Calu3 (cell line): ENCODE measurements at regions of chr7 and their contacts with region 1.

Region 1: GRCh38 chr7:24576171-24577025 is 3.1 kb downstream of the PALS2 start:
- DNase-seq: peak; percentile 56
- H3K4me3 Mint-ChIP-seq: peak overlapping the region; percentile 6
- H3K27ac Mint-ChIP-seq: no peak overlapping the region
- H3K4me1 Mint-ChIP-seq: peaks cover 50% of the 10 kb centered on the region
- H3K27me3 Mint-ChIP-seq: peaks cover 10% of the 10 kb centered on the region
- CTCF ChIP-seq: peak; percentile 85

Region 2: GRCh38 chr7:24271938-24272337 is 304.5 kb before region 1 on chr7:
- CTCF ChIA-PET with region 1: no interaction called
- intact Hi-C with region 1: no loop called
- DNase-seq: no peak
- H3K4me3 Mint-ChIP-seq: no peak overlapping the region
- H3K27ac Mint-ChIP-seq: no peak overlapping the region
- H3K4me1 Mint-ChIP-seq: no peaks in the 10 kb centered on the region
- H3K27me3 Mint-ChIP-seq: no peaks in the 10 kb centered on the region
- CTCF ChIP-seq: no peak

Region 3: DNA sequence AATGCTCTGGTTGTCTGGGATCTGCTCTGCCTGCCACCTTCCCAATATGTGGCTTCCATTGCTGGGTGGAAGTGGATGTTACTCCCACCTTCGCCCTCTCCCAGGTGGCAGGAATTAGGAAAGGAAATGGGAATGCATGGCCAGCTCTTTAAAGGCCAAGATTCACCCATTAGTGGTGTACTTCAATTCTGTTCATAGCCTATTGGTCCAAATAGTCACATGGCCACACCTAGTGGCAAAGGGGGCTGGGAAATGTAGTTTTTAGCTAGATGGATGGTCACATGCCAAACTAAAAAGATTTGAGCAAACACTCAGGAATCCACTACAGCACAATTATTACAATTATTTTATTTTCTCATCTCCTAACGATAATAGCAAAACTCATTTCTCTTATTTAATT is 157.3 kb before region 1 on chr7:
- CTCF ChIA-PET with region 1: no interaction called
- intact Hi-C with region 1: no loop called
- DNase-seq: no peak
- H3K4me3 Mint-ChIP-seq: no peak overlapping the region
- H3K27ac Mint-ChIP-seq: no peak overlapping the region
- H3K4me1 Mint-ChIP-seq: no peaks in the 10 kb centered on the region
- H3K27me3 Mint-ChIP-seq: peaks cover 20% of the 10 kb centered on the region
- CTCF ChIP-seq: no peak

Region 4: GRCh38 chr7:24477398-24478136 is 98.8 kb before region 1 on chr7:
- CTCF ChIA-PET with region 1: no interaction called
- intact Hi-C with region 1: loop called (anchors 5 kb)
- DNase-seq: peak; percentile 45
- H3K4me3 Mint-ChIP-seq: peak overlapping the region; percentile 5
- H3K27ac Mint-ChIP-seq: peak overlapping the region; percentile 70
- H3K4me1 Mint-ChIP-seq: peaks cover 14% of the 10 kb centered on the region
- H3K27me3 Mint-ChIP-seq: peaks cover 12% of the 10 kb centered on the region
- CTCF ChIP-seq: no peak

Region 5: GRCh38 chr7:25098096-25099046 is 522.0 kb after region 1 on chr7:
- CTCF ChIA-PET with region 1: interaction called, 3 read pairs
- intact Hi-C with region 1: loop called (anchors 5 kb)
- DNase-seq: peak; percentile 72
- H3K4me3 Mint-ChIP-seq: no peak overlapping the region
- H3K27ac Mint-ChIP-seq: no peak overlapping the region
- H3K4me1 Mint-ChIP-seq: peaks cover 32% of the 10 kb centered on the region
- H3K27me3 Mint-ChIP-seq: no peaks in the 10 kb centered on the region
- CTCF ChIP-seq: peak; percentile 91